H1 (cell line): ENCODE measurements at regions of chr20 and their contacts with region 1.

Region 1: DNA sequence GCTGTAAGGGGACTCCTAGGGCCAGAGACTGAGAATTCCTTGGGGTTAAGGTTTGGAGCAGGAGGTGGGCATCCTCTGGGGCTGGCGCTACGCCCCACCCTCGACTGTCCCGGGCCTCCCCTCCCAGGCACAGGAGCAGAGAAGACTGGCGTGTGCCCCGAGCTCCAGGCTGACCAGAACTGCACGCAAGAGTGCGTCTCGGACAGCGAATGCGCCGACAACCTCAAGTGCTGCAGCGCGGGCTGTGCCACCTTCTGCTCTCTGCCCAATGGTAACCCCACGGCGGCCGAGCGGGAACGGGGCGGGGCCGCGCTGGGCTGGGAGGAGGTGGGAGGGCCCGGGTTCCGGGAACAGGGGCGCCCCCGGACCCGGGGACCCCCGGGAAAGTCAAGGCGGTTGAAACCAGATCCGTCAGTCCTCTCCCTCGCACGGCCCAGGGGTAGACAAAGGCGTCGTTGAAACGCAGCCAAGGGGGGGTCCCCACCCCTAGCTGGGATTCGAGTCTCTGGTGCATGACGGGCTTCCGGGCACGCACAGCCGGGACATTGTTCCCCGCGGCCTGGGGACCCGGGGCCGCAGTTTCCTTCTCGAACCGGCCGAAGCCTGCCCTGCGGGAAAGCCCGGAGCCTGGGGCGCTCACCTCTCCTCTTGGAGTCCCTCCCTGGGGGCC is 844 bp downstream of the WFDC2 start:
- DNase-seq: peak in 1 of 2 experiments; percentile 87
- H3K4me3 ChIP-seq: peak overlapping the region; percentile 63 to 77 (median 70)
- H3K27ac ChIP-seq: peak overlapping the region; percentile 36; the same call in 1 of the 2 replicates
- H3K4me1 ChIP-seq: peaks cover 2 to 20% (median 7%) of the 10 kb centered on the region in 4 experiments
- H3K27me3 ChIP-seq: peaks cover 0 to 4% (median 1%) of the 10 kb centered on the region in 4 experiments; a peak in 3 of 7 replicates
- CTCF ChIP-seq: no peak
- EP300 ChIP-seq: no peak
- POLR2A ChIP-seq: peak in 1 of 2 experiments; percentile 67; a peak in 1 of 3 replicates
- RAD21 ChIP-seq: no peak

Region 2: GRCh38 chr20:45311589-45312211 is 158.7 kb before region 1 on chr20:
- CTCF ChIA-PET with region 1: interaction called, 13 read pairs
- POLR2A ChIA-PET with region 1: no interaction called
- DNase-seq: peak in 1 of 2 experiments; percentile 93
- H3K4me3 ChIP-seq: peak overlapping the region; percentile 24 to 55 (median 48); a peak in 7 of 8 replicates
- H3K27ac ChIP-seq: no peak overlapping the region
- H3K4me1 ChIP-seq: peaks cover 0 to 11% (median 7%) of the 10 kb centered on the region in 4 experiments; a peak in 5 of 7 replicates
- H3K27me3 ChIP-seq: peaks cover 0 to 15% (median 5%) of the 10 kb centered on the region in 4 experiments; a peak in 5 of 7 replicates
- CTCF ChIP-seq: peak; percentile 87 to 96 (median 95)
- EP300 ChIP-seq: no peak
- POLR2A ChIP-seq: no peak
- RAD21 ChIP-seq: peak; percentile 69 to 73

Region 3: GRCh38 chr20:45456632-45457031 is 13.8 kb before region 1 on chr20:
- CTCF ChIA-PET with region 1: interaction called, 317 read pairs
- POLR2A ChIA-PET with region 1: interaction called, 9 read pairs
- DNase-seq: peak in 1 of 2 experiments; percentile 73
- H3K4me3 ChIP-seq: no peak overlapping the region
- H3K27ac ChIP-seq: no peak overlapping the region
- H3K4me1 ChIP-seq: no peaks in the 10 kb centered on the region; a peak in 1 of 7 replicates
- H3K27me3 ChIP-seq: no peaks in the 10 kb centered on the region
- CTCF ChIP-seq: peak; percentile 58 to 76 (median 63)
- EP300 ChIP-seq: no peak
- POLR2A ChIP-seq: no peak
- RAD21 ChIP-seq: peak; percentile 50 to 64

Region 4: GRCh38 chr20:45487231-45487635 is 16.8 kb after region 1 on chr20:
- CTCF ChIA-PET with region 1: interaction called, 68 read pairs
- POLR2A ChIA-PET with region 1: interaction called, 24 read pairs
- DNase-seq: peak in 1 of 2 experiments; percentile 77
- H3K4me3 ChIP-seq: peak overlapping the region; percentile 38 to 60 (median 43)
- H3K27ac ChIP-seq: no peak overlapping the region
- H3K4me1 ChIP-seq: peaks cover 0 to 11% (median 0%) of the 10 kb centered on the region in 4 experiments; a peak in 2 of 7 replicates
- H3K27me3 ChIP-seq: no peaks in the 10 kb centered on the region
- CTCF ChIP-seq: peak; percentile 26 to 46 (median 46); a peak in 3 of 4 replicates
- EP300 ChIP-seq: no peak
- POLR2A ChIP-seq: no peak
- RAD21 ChIP-seq: peak; percentile 37 to 46